ENCODE measurements at regions of chr2 and their contacts with region 1.

Region 1: GRCh38 chr2:182132605-182133004 is 147.0 kb downstream of the PPP1R1C start:
- DNase-seq: no peak
- H3K4me3 ChIP-seq: no peak overlapping the region
- H3K27ac ChIP-seq: no peak overlapping the region
- H3K27me3 ChIP-seq: no peaks in the 10 kb centered on the region
- CTCF ChIP-seq: peak; percentile 68

Region 2: GRCh38 chr2:181566334-181567032 is 566.1 kb before region 1 on chr2:
- CTCF ChIA-PET with region 1: interaction called, 10 read pairs
- POLR2A ChIA-PET with region 1: no interaction called
- DNase-seq: no peak
- H3K4me3 ChIP-seq: no peak overlapping the region
- H3K27ac ChIP-seq: no peak overlapping the region
- H3K27me3 ChIP-seq: no peaks in the 10 kb centered on the region
- CTCF ChIP-seq: no peak

Region 3: DNA sequence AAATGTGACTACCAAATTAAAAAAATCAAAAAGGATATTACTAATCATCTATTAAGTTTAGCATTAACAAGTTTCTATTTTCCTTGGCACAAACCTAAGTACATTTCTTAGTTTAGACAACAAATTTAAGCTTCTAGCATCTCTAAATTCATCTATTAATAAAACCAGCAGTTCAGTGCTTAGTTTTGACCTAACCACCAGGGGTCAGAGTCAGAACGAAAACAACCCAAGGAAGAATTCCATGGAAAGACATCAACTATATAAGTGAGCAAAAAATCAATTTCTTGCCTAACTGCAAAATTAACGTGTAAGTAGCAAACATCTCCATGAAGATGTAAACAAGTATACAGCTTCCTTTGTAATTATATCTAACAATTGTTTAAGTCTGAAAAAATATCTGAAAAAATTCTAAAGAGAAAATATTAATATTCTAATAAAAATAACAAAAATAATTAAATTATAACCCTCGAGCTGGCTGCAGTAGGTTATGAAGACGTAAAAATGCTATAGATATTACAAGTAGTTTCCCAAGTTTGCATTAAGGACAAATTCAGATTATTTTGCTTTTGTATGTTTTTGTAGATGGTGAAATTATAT is 559.4 kb before region 1 on chr2:
- CTCF ChIA-PET with region 1: interaction called, 23 read pairs
- POLR2A ChIA-PET with region 1: no interaction called
- DNase-seq: no peak
- H3K4me3 ChIP-seq: no peak overlapping the region
- H3K27ac ChIP-seq: no peak overlapping the region
- H3K27me3 ChIP-seq: no peaks in the 10 kb centered on the region
- CTCF ChIP-seq: peak; percentile 62

Region 4: DNA sequence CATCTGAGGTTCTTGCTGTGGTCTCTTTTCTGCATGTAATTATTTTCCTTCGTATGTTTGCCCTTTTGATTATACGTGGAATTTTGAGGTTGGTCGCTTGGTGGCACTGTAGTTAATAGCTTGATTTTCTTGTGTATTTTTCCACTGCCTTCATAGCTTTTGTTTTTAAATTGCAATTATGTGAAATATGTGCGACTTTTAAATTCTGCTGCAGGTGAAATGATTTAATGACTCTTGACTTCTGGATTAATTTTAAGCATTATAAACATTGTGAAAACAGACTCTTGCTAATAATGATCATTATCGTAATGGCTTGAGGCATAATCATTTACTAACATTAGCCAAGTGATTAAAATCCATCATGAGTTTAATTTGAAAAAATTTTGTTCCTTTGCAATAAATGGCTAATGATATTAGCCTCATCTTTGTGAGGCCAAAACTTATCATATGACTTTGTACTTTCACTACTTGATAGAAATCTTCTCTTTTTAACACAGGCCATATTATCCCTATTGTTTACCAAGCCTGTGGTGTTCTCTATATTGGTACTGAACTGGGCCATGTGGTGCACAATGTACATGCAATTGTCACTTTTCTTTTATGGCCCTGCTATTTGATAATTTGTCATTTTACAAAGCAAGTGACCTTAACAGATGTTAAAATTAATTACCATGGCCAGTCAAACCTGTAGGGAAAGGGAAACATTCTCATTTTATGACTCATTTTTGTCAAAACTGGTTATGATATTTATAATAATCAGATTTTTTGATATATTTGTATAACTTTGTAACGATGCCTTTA is 389.5 kb before region 1 on chr2:
- CTCF ChIA-PET with region 1: interaction called, 35 read pairs
- POLR2A ChIA-PET with region 1: no interaction called
- DNase-seq: peak; percentile 11
- H3K4me3 ChIP-seq: no peak overlapping the region
- H3K27ac ChIP-seq: no peak overlapping the region
- H3K27me3 ChIP-seq: no peaks in the 10 kb centered on the region
- CTCF ChIP-seq: peak; percentile 66

Region 5: GRCh38 chr2:181953881-181954537 is 178.6 kb before region 1 on chr2:
- CTCF ChIA-PET with region 1: interaction called, 11 read pairs
- POLR2A ChIA-PET with region 1: interaction called, 4 read pairs
- DNase-seq: no peak
- H3K4me3 ChIP-seq: no peak overlapping the region
- H3K27ac ChIP-seq: no peak overlapping the region
- H3K27me3 ChIP-seq: no peaks in the 10 kb centered on the region
- CTCF ChIP-seq: peak; percentile 65